ENCODE measurements at regions of chr2 and their contacts with region 1.

Region 1: DNA sequence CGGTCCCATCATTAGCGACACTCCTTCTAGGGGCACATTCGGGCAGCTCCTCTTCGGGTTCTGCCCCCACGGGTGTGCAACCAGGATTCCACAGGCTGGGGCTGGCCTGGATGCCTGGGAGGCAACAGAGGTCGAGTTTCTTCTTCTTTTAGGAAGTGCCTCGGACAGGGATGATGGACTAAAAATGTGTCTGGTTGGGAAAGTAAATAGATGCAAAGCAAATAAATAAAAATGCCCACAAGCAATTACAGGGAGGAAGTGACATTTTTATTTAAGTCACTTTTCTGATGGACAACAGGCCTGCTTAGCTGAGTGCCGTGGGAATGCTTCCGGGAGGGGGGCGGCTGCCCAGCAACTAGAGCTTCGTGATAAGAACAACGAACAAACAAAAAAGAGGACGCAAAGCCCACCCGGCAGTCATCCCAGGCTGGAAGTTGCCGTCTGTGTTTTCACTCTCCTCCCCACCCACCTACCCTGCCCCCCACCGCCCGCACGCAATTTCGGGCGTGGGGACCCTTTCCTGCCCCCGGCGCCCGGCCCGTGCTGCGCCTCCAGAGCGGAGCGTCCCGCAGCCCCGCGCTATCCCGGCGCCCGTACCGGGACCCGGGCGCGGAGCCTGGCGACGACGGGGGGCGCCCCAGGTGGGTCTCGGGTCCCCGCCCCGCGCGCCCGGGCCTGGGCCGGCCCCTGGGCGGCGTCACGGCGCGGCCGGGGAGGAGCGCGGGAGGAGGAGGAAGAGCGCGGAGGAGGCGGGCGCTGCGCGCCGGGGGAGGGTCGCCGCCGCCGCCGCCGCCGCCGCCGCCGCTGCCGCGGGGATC is 412 bp upstream of the NCK2 start:
- DNase-seq: peak; percentile 59
- ATAC-seq: peak; percentile 64
- H3K4me3 Mint-ChIP-seq: peak overlapping the region; percentile 75
- H3K27ac Mint-ChIP-seq: peak overlapping the region; percentile 88
- H3K4me1 Mint-ChIP-seq: peaks cover 60% of the 10 kb centered on the region
- H3K27me3 Mint-ChIP-seq: no peaks in the 10 kb centered on the region
- CTCF ChIP-seq: no peak

Region 2: GRCh38 chr2:104654811-104655210 is 1089.5 kb before region 1 on chr2:
- CTCF ChIA-PET with region 1: no interaction called
- POLR2A ChIA-PET with region 1: no interaction called
- intact Hi-C with region 1: no loop called
- DNase-seq: no peak
- ATAC-seq: no peak
- H3K4me3 Mint-ChIP-seq: no peak overlapping the region
- H3K27ac Mint-ChIP-seq: no peak overlapping the region
- H3K4me1 Mint-ChIP-seq: peaks cover 7% of the 10 kb centered on the region
- H3K27me3 Mint-ChIP-seq: peaks cover 29% of the 10 kb centered on the region
- CTCF ChIP-seq: no peak

Region 3: DNA sequence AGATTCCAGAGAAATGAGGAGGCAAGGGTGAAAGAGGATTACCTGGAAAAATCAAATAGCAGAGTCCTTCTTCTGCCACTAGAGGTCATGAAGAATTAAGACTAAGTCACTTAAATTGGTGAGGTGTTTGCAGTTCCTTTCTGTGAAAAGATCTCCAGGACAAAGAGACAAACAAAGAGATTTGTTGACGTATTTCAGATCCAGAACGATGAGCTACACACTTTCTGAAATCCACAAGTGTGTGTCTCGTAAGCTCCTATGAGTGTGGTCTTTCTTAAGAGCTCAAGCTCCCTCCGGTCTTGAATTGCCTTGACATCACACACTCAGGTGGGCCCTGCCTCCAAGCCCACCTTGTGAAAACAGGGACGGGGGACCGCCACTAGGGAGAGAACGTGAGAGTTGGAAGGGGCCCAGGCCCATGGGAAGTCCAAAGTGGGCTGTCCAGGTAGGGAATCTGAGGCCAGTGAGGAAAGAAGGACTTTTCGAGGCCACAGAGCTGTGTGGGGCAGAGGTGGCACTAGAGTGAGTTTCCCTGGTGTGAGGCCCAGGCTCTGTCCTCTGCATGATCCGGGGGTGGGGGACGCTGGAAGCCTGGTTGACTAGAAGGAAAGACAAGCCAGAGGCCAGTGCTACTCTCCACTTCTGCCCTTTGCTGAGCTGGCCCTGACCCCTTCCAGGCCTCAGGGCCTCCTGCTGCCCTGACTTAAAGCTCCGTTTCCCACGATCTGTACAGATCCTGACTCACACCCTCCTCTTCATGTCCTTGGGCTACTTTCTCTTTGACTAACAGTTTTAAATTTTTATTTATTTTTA is 167.7 kb before region 1 on chr2:
- CTCF ChIA-PET with region 1: interaction called, 10 read pairs
- POLR2A ChIA-PET with region 1: interaction called, 3 read pairs
- intact Hi-C with region 1: loop called (anchors 10 kb)
- DNase-seq: no peak
- ATAC-seq: peak; percentile 66
- H3K4me3 Mint-ChIP-seq: no peak overlapping the region
- H3K27ac Mint-ChIP-seq: peak overlapping the region; percentile 66
- H3K4me1 Mint-ChIP-seq: peaks cover 28% of the 10 kb centered on the region
- H3K27me3 Mint-ChIP-seq: no peaks in the 10 kb centered on the region
- CTCF ChIP-seq: peak; percentile 73

Region 4: DNA sequence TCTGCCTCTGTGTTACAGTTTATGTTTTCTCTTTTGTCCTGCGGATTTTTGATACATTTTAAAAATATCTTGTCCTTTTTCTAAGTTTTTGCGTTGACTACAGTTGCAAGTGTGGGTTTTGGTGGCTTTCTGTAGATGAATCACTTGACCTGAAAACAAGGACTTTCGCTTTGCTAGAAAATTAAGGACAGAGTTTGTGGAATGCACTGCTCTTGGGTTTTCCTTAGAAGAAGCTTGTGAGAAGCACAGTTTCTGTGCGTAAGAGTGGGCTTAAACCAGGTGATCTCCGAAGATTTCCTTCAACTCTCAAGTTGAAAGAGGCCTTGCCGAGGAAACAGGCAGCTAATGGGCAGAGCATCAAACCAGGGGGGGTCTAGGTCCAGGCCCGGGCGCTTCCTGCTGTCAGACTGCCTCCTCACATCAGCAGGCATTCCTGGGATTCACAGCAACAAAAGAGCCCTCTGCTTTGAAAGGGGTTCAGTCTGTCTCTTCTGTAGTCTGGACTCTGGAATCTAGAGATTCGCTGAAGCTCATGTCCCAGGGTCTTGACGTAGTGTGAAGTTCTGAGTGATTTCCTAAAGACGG is 17.7 kb after region 1 on chr2:
- CTCF ChIA-PET with region 1: interaction called, 9 read pairs
- POLR2A ChIA-PET with region 1: interaction called, 63 read pairs
- intact Hi-C with region 1: no loop called
- DNase-seq: no peak
- ATAC-seq: peak; percentile 13
- H3K4me3 Mint-ChIP-seq: peak overlapping the region; percentile 62
- H3K27ac Mint-ChIP-seq: peak overlapping the region; percentile 87
- H3K4me1 Mint-ChIP-seq: peaks cover 94% of the 10 kb centered on the region
- H3K27me3 Mint-ChIP-seq: no peaks in the 10 kb centered on the region
- CTCF ChIP-seq: no peak

Region 5: DNA sequence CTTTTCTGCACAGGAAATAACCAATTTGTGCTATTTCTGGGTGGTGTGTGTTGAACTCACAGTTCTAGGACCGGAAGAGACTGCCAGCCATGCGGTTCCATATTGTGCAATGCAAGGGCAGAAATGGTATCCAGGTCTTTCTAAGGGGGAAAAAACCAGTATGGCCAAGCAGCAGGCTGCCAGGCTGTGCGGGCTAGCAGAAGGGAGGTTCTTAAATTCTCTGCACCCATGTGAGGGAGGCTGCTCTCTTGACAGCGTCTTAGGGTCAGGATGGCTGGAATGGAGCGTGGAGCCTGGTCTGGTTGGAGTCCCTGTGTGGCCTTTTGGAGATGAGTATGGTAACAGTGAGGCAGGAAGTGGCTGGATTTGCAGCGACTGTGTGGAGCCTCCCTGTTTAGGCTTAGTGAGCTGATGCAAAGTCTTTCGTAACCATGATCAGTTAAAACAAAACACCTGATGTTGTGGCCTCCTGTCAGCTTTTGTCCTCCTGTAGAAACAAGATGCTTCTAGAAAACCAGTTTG is 53.1 kb after region 1 on chr2:
- CTCF ChIA-PET with region 1: interaction called, 14 read pairs
- POLR2A ChIA-PET with region 1: interaction called, 53 read pairs
- intact Hi-C with region 1: loop called (anchors 2 kb)
- DNase-seq: peak; percentile 67
- ATAC-seq: peak; percentile 42
- H3K4me3 Mint-ChIP-seq: peak overlapping the region; percentile 66
- H3K27ac Mint-ChIP-seq: peak overlapping the region; percentile 93
- H3K4me1 Mint-ChIP-seq: peaks cover 90% of the 10 kb centered on the region
- H3K27me3 Mint-ChIP-seq: no peaks in the 10 kb centered on the region
- CTCF ChIP-seq: no peak

Region 6: GRCh38 chr2:105809097-105809473 is 64.8 kb after region 1 on chr2:
- CTCF ChIA-PET with region 1: interaction called, 5 read pairs
- POLR2A ChIA-PET with region 1: interaction called, 29 read pairs
- intact Hi-C with region 1: no loop called
- DNase-seq: peak; percentile 80
- ATAC-seq: peak; percentile 84
- H3K4me3 Mint-ChIP-seq: no peak overlapping the region
- H3K27ac Mint-ChIP-seq: peak overlapping the region; percentile 83
- H3K4me1 Mint-ChIP-seq: peaks cover 90% of the 10 kb centered on the region
- H3K27me3 Mint-ChIP-seq: no peaks in the 10 kb centered on the region
- CTCF ChIP-seq: no peak

Region 7: DNA sequence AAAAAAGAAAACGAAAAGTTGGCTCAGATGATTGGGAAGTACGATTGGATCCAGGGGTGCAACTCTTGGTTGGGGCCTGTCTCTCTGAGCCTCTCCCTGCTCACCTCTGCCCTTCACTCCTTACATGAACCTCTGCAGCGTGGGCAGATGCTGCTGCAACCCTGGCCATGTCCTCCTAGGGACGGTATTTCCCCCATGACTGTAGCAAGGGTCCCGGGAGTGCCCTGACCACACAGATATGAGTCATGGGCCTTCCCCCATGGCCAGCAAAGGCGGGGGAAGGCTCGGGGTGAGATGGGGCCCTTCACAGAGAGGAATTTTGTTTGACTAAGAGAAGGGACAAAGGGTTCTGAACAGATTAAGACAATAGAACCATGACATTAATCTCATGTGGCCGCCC is 129.4 kb after region 1 on chr2:
- CTCF ChIA-PET with region 1: interaction called, 3 read pairs
- POLR2A ChIA-PET with region 1: no interaction called
- intact Hi-C with region 1: loop called (anchors 5 kb)
- DNase-seq: peak; percentile 92
- ATAC-seq: peak; percentile 90
- H3K4me3 Mint-ChIP-seq: peak overlapping the region; percentile 2
- H3K27ac Mint-ChIP-seq: peak overlapping the region; percentile 84
- H3K4me1 Mint-ChIP-seq: peaks cover 92% of the 10 kb centered on the region
- H3K27me3 Mint-ChIP-seq: no peaks in the 10 kb centered on the region
- CTCF ChIP-seq: no peak